Astrocyte of the cerebellum (primary cell): ENCODE measurements at regions of chr6 and their contacts with region 1.

Region 1: DNA sequence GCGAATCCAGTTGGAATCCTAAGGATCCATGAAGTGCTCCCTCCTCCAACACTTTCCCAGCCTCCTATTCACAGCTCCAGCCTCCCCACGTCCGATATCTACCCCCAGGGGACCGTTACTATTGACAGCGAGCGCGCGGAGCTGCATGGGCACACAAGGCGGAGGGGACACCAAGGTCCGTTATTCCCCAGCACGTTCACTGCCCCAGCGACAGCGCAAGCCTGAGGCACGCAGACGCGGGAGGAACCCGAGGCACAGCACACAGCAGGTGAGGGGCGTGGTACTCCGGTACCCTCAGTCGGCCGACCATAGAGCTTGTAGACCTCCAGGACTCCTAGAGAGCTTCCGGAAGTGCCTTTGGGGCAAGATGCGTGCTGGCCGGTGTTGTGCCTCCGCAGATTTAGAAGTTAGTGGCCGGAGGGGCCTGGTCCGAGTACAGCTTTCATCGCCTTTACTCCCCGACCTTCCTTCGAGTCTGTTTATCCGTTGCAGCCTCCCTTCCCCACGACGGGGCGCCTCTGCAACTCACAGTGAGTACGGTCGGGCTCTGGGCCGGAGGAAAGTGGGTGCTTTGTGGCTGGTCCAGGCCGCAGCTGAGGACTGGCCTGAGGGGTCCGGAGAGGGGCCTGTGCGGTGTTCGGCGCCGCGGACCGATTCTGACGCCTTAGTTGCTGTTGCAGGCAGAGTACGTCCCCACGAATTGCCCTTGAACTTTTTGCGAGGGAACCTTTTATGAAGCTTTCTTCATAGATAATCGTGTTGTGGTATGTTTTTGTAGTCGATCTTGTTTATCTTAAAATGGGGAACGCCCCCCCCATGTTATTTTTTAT is at the start of gene ZKSCAN8:
- DNase-seq: peak; percentile 75
- H3K4me3 ChIP-seq: peak within 1 kb of the TSS; percentile 81
- CTCF ChIP-seq: no peak

Region 2: DNA sequence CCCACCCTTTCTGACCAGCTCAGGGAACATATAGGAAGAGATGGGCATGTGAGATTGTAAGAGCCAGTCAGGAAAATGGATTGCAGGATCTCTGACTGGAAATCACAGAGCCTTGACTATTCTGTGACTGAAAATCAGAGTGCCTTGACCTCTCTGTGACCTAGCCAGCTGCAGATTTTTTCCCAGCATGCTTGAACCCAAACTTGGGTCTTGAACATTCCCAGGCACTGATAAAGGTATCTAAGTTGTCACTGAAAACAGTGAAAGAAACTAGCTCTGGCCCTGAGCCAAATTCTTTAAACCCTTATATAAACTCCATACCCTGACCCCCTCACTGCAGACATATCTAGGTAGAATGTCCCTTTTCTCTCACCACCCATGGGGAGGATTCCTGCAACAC is 63.7 kb before region 1 on chr6:
- in situ Hi-C with region 1: no loop called
- DNase-seq: no peak
- H3K4me3 ChIP-seq: no peak overlapping the region
- CTCF ChIP-seq: no peak

Region 3: GRCh38 chr6:28104392-28105244 is 37.1 kb before region 1 on chr6:
- in situ Hi-C with region 1: loop called (anchors 5 kb)
- DNase-seq: peak; percentile 29
- H3K4me3 ChIP-seq: peak overlapping the region; percentile 68
- CTCF ChIP-seq: peak; percentile 70

Region 4: DNA sequence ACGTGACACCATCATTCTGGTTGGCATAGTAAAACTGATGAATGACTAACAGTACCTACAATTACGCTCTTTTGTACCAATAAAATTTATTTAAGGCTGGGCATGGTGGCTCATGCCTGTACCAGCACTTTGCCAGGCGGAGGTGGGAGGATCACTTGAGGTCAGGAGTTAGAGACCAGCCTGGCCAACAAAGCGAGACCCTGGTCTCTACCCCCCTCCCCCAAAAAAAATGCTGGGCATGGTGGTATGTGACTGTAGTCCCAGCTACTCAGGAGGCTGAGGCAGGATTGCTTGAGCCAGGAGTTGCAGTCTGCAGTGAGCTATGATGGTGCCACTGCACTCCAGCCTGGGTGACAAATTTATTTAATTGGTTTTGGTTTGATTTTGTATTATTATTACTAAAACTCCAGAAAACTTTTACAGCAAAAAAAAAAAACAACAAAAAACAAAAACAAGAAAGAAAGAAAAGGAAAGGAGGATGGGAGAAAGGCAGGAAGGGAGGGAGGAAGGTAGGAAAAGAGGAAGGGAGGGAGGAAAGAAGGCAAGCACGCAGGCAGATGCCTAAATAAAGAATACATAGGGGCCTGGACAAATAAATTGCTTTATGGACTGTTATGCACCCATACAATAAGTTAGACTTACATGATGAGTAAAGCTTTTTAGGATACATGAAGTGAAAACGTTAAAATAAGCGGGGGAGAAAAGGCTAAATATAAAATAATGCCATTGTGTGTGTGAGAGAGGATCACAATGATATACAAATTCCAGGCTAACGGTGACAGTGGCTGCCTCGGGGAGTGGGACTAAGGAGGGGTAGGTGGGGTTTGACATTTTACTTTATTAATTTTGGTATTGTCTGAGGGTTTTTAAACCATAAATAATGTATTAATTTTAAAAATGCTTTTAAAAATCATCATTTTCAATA is 82.7 kb after region 1 on chr6:
- in situ Hi-C with region 1: loop called (anchors 5 kb)
- DNase-seq: no peak
- H3K4me3 ChIP-seq: peak overlapping the region; percentile 72
- CTCF ChIP-seq: no peak

Region 5: GRCh38 chr6:28383235-28384142 is 241.8 kb after region 1 on chr6:
- in situ Hi-C with region 1: loop called (anchors 5 kb)
- DNase-seq: peak; percentile 43
- H3K4me3 ChIP-seq: peak overlapping the region; percentile 43
- CTCF ChIP-seq: peak; percentile 59